Activated T-helper 2 cell treated with anti-CD3 and anti-CD28 coated beads, Interferon-gamma antibody, Interleukin-2, Interleukin-4, amounts not matched to agents 10 μg/mL and 5 μg/mL and 100 μg/mL, durations not matched to agents 14 hours and 24 hours and 36 hours (primary cell): ENCODE measurements at regions of chr5 and their contacts with region 1.

Region 1: GRCh38 chr5:112707187-112708102 is 30.2 kb upstream of the APC start:
- DNase-seq: peak; percentile 98
- H3K4me3 Mint-ChIP-seq: peak overlapping the region; percentile 93
- H3K27ac Mint-ChIP-seq: peak overlapping the region; percentile 71
- H3K4me1 Mint-ChIP-seq: peaks cover 35% of the 10 kb centered on the region
- H3K27me3 Mint-ChIP-seq: peaks cover 3% of the 10 kb centered on the region

Region 2: DNA sequence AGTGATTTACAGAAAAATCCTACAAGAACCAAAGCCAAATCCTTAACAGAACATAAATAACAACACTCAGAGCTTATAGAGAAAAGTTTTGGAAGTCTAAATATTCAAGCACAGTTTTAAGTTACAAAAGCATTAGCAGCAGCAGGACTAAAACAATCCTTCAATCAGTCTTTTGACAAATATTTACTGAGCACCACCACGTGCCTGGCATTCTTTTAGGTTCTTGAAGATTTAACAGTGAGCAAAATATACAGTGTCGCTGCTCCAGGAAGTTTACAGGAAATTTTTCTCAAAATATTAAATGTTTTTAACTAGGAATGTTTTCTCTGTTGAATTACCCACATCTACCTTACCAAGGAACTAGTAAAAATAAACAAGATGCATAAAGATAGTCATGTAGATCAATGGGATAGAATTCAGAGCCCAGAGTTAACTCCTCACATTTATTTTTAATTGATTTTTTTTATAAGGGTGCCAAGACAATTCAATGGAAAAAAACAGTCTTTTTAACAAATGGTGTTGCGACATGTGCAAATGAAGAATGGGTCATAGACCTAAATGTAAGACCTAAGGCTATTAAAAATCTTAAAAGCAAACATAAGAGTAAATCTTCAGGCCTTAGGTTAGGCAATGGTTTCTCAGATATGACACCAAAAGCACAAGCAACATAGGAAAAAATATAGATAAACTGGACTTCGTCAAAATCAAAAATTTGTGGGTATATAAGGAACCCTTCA is 299.6 kb before region 1 on chr5:
- intact Hi-C with region 1: no loop called
- DNase-seq: no peak
- H3K4me3 Mint-ChIP-seq: no peak overlapping the region
- H3K27ac Mint-ChIP-seq: no peak overlapping the region
- H3K4me1 Mint-ChIP-seq: no peaks in the 10 kb centered on the region
- H3K27me3 Mint-ChIP-seq: peaks cover 26% of the 10 kb centered on the region

Region 3: GRCh38 chr5:112737463-112738190 is 30.2 kb after region 1 on chr5 and contains the start of gene APC:
- intact Hi-C with region 1: loop called (anchors 1 kb)
- DNase-seq: peak; percentile 77
- H3K4me3 Mint-ChIP-seq: peak within 1 kb of the TSS; percentile 84
- H3K27ac Mint-ChIP-seq: peak within 1 kb of the TSS; percentile 54
- H3K4me1 Mint-ChIP-seq: peaks cover 10% of the 10 kb centered on the region
- H3K27me3 Mint-ChIP-seq: peaks cover 2% of the 10 kb centered on the region
- total RNA-seq, gene APC: 17.4 and 21.4 TPM in 2 replicates

Region 4: GRCh38 chr5:112976432-112977309 is 269.2 kb after region 1 on chr5 and contains the start of gene DCP2:
- intact Hi-C with region 1: loop called (anchors 5 kb)
- DNase-seq: peak; percentile 96
- H3K4me3 Mint-ChIP-seq: peak within 1 kb of the TSS; percentile 99
- H3K27ac Mint-ChIP-seq: peak within 1 kb of the TSS; percentile 95
- H3K4me1 Mint-ChIP-seq: peaks cover 39% of the 10 kb centered on the region
- H3K27me3 Mint-ChIP-seq: no peaks in the 10 kb centered on the region
- total RNA-seq, gene DCP2: 81.6 and 84.1 TPM in 2 replicates

Region 5: DNA sequence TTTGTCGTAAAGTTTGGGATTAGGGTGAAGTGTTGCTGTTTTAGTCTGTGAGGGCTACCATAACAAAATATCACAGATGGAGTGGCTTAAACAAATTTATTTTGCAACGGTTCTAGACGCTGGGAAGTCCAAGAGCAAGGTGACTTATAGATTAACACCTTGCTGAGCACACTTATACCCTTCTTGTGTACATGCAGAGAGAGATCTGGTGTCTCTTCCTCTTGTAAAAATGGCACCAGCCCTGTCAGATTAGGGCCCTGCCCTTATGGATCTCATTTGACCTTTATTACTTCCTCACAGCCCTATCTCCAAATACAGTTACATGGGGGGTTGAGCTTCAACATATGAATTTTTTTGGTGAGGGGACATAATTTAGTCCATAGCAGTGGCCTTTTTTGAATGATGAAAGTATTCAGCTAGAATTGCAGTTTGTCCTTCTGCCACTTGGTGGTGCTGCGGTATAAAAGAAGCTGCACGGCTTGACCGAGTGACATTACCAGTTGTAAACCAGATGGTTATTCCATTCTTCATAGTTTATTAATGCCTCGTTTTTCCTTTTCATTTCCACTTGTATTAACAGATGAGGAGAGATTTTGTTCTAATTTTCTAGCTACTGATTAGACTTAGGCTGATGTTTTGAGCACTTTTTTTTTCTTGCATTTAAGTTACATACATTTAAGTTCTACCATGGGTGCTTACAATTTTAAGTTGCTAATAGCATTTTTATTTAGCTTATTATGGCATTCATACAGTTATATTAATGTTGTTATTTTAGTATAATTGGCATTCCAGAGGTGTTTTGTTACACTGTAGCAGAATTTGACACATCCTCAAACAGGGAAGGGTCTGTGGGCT is 288.5 kb after region 1 on chr5:
- intact Hi-C with region 1: no loop called
- DNase-seq: peak; percentile 59
- H3K4me3 Mint-ChIP-seq: no peak overlapping the region
- H3K27ac Mint-ChIP-seq: no peak overlapping the region
- H3K4me1 Mint-ChIP-seq: peaks cover 23% of the 10 kb centered on the region
- H3K27me3 Mint-ChIP-seq: no peaks in the 10 kb centered on the region